Activated CD8-positive, alpha-beta memory T cell treated with anti-CD3 and anti-CD28 coated beads, Interleukin-2, amount 10 ng/mL, durations not matched to agents 7 days and 5 days (primary cell): ENCODE measurements at regions of chr7 and their contacts with region 1.

Region 1: GRCh38 chr7:50418086-50418515 is 32.0 kb downstream of the FIGNL1 start:
- DNase-seq: peak; percentile 87
- ATAC-seq: peak; percentile 99
- H3K4me3 Mint-ChIP-seq: no peak overlapping the region
- H3K27ac Mint-ChIP-seq: no peak overlapping the region
- H3K4me1 Mint-ChIP-seq: peaks cover 25% of the 10 kb centered on the region
- H3K27me3 Mint-ChIP-seq: no peaks in the 10 kb centered on the region

Region 2: DNA sequence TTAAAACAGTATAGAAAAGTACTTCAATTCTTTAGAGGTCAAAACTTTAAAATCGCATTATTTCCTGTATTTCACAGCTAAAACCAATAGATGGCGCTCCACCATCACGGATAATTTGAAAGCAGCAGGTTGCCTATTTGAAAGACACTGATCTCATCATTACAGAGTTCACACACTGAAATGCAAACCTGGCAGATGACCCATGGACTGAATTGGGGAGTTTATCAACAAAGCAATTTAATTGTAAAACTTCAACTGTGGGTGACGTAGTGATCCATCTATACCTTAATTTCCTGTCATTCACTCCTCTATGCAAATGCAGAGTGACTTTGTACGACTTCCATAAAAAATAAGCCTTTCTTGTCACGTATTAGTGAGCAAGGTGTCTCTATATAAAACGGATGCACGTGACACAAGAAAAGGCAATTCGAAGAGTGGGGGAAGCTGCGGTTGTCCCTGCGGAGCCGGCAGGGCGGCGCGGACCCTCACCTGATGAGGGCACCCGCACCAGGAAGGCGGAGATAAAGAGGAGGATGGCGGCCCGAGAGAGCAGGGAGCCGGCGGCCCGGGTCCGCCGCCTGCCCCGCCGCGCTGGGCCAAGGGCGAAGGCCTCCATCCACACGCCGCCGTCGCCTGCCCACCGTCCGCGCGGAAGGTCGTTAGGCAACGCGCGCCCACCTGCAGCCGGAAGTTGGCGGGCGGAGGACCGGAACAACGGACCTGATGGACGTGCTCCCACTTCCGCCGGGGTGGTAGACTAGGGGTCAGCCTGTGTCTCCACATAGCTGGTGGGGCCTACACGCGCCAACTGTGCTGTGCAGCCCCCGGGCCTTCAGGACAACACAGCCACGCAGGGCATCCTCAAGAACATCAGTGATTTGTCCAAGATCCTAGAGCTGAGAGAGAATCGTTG is 325.3 kb before region 1 on chr7 and contains the start of gene ZPBP:
- CTCF ChIA-PET with region 1: interaction called, 62 read pairs
- DNase-seq: peak; percentile 59
- ATAC-seq: peak; percentile 75
- H3K4me3 Mint-ChIP-seq: peak within 1 kb of the TSS; percentile 76
- H3K27ac Mint-ChIP-seq: peak within 1 kb of the TSS; percentile 72
- H3K4me1 Mint-ChIP-seq: peaks cover 8% of the 10 kb centered on the region
- H3K27me3 Mint-ChIP-seq: peaks cover 24% of the 10 kb centered on the region
- total RNA-seq, gene ZPBP: not detected

Region 3: DNA sequence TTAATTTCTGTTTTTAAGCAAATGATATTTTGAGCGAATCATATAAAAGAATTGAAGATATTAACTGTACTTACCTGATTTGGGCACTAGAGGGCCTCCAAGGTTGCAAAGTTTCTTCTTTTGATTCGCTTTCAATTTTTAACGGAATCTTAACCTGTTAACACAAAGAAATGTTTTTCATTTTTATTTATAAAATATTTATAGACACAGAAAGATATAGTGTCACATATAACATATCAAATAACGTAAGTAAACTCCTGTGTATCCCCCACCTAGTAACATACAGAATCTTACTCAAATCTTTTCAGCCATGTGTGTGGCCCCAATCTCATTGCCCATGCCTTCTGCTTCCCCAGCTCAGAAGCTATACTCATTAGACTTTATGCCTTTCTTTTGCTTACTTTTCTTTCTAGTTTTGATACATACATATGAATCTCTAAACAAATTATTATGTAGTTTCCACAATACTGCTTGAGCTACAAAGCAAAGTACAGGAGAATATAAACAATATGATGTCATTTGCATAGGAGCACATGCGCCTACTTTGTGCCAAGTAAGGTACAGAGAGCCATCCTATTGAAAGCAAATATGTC is 275.6 kb before region 1 on chr7:
- CTCF ChIA-PET with region 1: interaction called, 21 read pairs
- DNase-seq: no peak
- ATAC-seq: peak; percentile 67
- H3K4me3 Mint-ChIP-seq: peak overlapping the region; percentile 50
- H3K27ac Mint-ChIP-seq: peak overlapping the region; percentile 81
- H3K4me1 Mint-ChIP-seq: peaks cover 28% of the 10 kb centered on the region
- H3K27me3 Mint-ChIP-seq: peaks cover 16% of the 10 kb centered on the region

Region 4: DNA sequence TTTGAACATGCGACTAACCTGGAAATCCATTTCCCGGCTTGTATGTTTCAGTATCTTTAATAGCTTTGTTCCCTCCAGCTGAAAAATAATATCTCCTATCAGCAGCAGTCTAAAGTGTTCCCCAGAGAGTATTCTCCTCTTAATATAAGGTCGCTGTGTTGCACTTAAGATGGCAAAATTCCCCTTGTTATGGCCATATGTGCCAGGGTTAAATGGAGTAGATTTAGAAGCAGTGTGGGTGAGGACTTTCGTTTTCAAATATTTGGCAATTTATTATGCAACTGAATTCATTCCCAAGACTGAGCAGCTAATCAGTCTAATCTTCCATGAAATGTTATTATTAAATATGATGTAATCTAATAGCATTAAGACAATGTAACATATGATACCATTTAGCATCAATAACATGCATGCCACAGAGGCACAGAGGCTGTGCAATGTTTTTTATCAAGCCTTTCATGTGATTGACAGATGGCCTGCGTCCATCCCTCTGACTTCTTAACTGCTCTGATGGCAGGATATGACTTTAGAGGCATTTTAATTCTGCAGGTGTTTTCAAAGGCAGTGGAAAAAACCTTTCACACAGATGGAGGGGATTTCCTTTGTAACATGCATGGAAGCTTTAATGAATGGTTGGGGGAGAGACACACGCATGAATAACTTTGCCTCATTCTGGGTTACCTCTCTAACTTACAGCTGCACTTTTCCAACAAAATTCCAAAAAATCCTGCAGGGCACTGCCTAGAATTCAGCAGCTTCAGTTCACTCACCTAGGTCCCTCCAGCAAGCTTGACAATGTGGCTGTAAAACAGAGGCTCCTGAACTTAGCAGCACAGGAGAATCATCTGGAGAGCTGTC is 269.9 kb before region 1 on chr7:
- CTCF ChIA-PET with region 1: interaction called, 21 read pairs
- DNase-seq: no peak
- ATAC-seq: peak; percentile 47
- H3K4me3 Mint-ChIP-seq: no peak overlapping the region
- H3K27ac Mint-ChIP-seq: no peak overlapping the region
- H3K4me1 Mint-ChIP-seq: peaks cover 33% of the 10 kb centered on the region
- H3K27me3 Mint-ChIP-seq: no peaks in the 10 kb centered on the region

Region 5: GRCh38 chr7:50406935-50407538 is 11.1 kb before region 1 on chr7:
- CTCF ChIA-PET with region 1: interaction called, 16 read pairs
- DNase-seq: no peak
- ATAC-seq: no peak
- H3K4me3 Mint-ChIP-seq: no peak overlapping the region
- H3K27ac Mint-ChIP-seq: peak overlapping the region; percentile 13
- H3K4me1 Mint-ChIP-seq: peaks cover 53% of the 10 kb centered on the region
- H3K27me3 Mint-ChIP-seq: no peaks in the 10 kb centered on the region

Region 6: GRCh38 chr7:50431722-50432305 is 13.7 kb after region 1 on chr7:
- CTCF ChIA-PET with region 1: interaction called, 17 read pairs
- DNase-seq: no peak
- ATAC-seq: no peak
- H3K4me3 Mint-ChIP-seq: no peak overlapping the region
- H3K27ac Mint-ChIP-seq: no peak overlapping the region
- H3K4me1 Mint-ChIP-seq: no peaks in the 10 kb centered on the region
- H3K27me3 Mint-ChIP-seq: no peaks in the 10 kb centered on the region

Region 7: DNA sequence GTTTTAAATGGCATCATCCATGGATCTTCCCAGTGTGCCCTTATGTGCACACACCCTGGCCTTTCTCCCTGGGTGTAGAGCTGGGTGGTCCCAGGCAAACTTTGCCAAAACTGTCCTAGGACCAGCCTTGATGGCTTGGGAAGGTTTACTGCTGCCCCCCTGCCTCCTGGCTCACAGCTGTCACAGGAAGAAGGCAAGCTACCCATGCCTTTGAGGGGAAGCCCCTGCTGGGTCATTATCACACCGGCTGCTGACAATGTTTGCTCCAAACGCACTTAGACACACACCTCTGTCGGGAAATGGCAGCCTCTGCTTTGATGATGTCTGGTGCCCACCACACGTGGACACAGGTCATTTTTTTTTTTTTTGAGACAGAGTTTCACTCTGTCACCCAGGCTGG is 57.2 kb after region 1 on chr7:
- CTCF ChIA-PET with region 1: no interaction called
- DNase-seq: no peak
- ATAC-seq: peak; percentile 23
- H3K4me3 Mint-ChIP-seq: no peak overlapping the region
- H3K27ac Mint-ChIP-seq: no peak overlapping the region
- H3K4me1 Mint-ChIP-seq: peaks cover 4% of the 10 kb centered on the region
- H3K27me3 Mint-ChIP-seq: peaks cover 8% of the 10 kb centered on the region